ENCODE measurements at regions of chr11 and their contacts with region 1.

Region 1: GRCh38 chr11:36289226-36289852 is at the start of gene COMMD9:
- DNase-seq: peak; percentile 89 to 97 (median 92)
- ATAC-seq: peak; percentile 97
- H3K4me3 ChIP-seq: peak within 1 kb of the TSS; percentile 72
- H3K4me3 Mint-ChIP-seq: peak within 1 kb of the TSS; percentile 94
- H3K27ac ChIP-seq: no peak within 1 kb of the TSS
- H3K27ac Mint-ChIP-seq: peak within 1 kb of the TSS; percentile 73
- H3K4me1 ChIP-seq: peaks cover 11% of the 10 kb centered on the region
- H3K4me1 Mint-ChIP-seq: peaks cover 43% of the 10 kb centered on the region
- H3K27me3 ChIP-seq: no peaks in the 10 kb centered on the region
- H3K27me3 Mint-ChIP-seq: no peaks in the 10 kb centered on the region
- CTCF ChIP-seq: no peak
- total RNA-seq, gene COMMD9: 33.6 to 34.6 TPM

Region 2: DNA sequence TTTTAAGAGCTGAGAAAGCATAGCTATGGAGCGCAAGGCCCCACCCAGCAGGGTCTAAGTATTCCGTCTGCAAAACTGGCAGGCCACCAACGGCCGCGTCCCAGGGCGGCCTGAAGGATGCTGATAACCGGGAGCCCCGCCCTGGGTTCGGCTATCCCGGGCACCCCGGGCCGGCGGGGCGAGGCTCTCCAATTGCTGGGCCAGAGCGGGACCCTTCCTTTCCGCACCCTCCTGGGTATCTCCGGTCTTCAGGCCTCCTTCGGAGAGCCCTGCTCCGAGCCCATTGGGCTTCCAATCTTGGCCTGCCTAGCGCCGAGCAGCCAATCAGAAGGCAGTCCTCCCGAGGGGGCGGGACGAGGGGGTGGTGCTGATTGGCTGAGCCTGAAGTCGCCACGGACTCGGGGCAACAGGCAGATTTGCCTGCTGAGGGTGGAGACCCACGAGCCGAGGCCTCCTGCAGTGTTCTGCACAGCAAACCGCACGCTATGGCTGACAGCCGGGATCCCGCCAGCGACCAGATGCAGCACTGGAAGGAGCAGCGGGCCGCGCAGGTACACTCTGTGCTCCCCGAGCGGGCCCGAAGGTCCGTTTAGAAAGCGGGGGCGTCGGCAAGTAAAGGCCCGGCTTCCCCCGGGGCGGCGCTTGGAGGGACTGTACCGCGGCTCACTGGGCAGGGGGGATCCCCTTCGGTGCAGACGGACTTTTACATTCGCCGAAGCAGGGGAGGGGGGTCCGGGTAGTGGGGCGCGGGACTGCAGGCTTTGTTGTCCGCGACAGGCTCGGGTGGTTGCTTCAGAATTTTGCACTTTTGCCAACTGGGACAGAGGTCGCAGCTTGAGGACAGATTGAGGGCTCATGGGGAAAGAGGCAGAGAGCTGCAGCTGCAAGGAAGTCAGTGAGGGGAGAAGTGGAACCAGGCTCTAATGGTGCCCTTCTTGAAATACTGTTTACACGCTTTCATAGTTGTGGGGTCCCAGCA is 1850.5 kb before region 1 on chr11 and contains the start of gene CAT:
- CTCF ChIA-PET with region 1: no interaction called
- POLR2A ChIA-PET with region 1: no interaction called
- intact Hi-C with region 1: loop called in 1 of 2 experiments (anchors 10 kb)
- DNase-seq: peak; percentile 93 to 98 (median 98)
- ATAC-seq: peak; percentile 95
- H3K4me3 ChIP-seq: peak within 1 kb of the TSS; percentile 81
- H3K4me3 Mint-ChIP-seq: peak within 1 kb of the TSS; percentile 93
- H3K27ac ChIP-seq: peak within 1 kb of the TSS; percentile 57 to 77
- H3K27ac Mint-ChIP-seq: peak within 1 kb of the TSS; percentile 88
- H3K4me1 ChIP-seq: peaks cover 22% of the 10 kb centered on the region
- H3K4me1 Mint-ChIP-seq: peaks cover 47% of the 10 kb centered on the region
- H3K27me3 ChIP-seq: no peaks in the 10 kb centered on the region
- H3K27me3 Mint-ChIP-seq: no peaks in the 10 kb centered on the region
- CTCF ChIP-seq: no peak
- total RNA-seq, gene CAT: 8.5 to 9.8 TPM

Region 3: DNA sequence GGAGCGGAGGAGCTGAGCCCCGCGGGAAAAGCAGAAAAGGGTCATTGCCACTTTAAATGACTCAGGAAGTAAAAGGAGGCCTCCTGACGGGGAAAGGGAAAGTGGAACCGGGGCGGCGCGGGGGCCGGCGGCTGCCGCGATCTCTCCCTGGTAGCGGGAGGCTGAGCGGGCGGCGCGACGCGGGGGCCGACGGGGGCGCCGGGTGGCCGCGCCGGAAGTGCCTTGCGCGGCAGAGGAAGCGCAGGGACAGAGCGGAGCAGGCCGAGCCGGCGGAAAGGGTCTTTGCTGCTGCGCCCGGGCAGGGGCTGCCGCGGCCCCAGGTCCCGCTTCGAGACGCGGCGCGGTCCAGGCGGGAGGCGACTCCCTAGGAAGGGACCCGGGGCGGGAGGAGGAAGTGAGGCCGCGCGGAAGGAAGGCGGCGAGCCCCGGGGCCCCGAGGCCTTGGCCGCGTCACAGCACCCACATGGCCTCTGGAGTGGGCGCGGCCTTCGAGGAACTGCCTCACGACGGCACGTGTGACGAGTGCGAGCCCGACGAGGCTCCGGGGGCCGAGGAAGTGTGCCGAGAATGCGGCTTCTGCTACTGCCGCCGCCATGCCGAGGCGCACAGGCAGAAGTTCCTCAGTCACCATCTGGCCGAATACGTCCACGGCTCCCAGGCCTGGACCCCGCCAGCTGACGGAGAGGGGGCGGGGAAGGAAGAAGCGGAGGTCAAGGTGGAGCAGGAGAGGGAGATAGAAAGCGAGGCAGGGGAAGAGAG is 626.5 kb before region 1 on chr11 and contains the start of gene TRIM44:
- CTCF ChIA-PET with region 1: no interaction called
- POLR2A ChIA-PET with region 1: no interaction called
- intact Hi-C with region 1: loop called in 1 of 2 experiments (anchors 5 kb)
- DNase-seq: peak; percentile 61 to 91 (median 74)
- ATAC-seq: peak; percentile 80
- H3K4me3 ChIP-seq: peak within 1 kb of the TSS; percentile 91
- H3K4me3 Mint-ChIP-seq: peak within 1 kb of the TSS; percentile 90
- H3K27ac ChIP-seq: peak within 1 kb of the TSS; percentile 76 to 80
- H3K27ac Mint-ChIP-seq: peak within 1 kb of the TSS; percentile 90
- H3K4me1 ChIP-seq: peaks cover 25% of the 10 kb centered on the region
- H3K4me1 Mint-ChIP-seq: peaks cover 53% of the 10 kb centered on the region
- H3K27me3 ChIP-seq: peaks cover 0 to 4% of the 10 kb centered on the region in 2 experiments
- H3K27me3 Mint-ChIP-seq: peaks cover 8% of the 10 kb centered on the region
- CTCF ChIP-seq: no peak
- total RNA-seq, gene TRIM44: 32.1 to 36.7 TPM

Region 4: GRCh38 chr11:36258730-36259360 is 30.5 kb before region 1 on chr11:
- CTCF ChIA-PET with region 1: no interaction called
- POLR2A ChIA-PET with region 1: no interaction called
- intact Hi-C with region 1: no loop called
- DNase-seq: peak in 3 of 14 experiments; percentile 5 to 21 (median 17)
- ATAC-seq: no peak
- H3K4me3 ChIP-seq: no peak overlapping the region
- H3K4me3 Mint-ChIP-seq: no peak overlapping the region
- H3K27ac ChIP-seq: no peak overlapping the region
- H3K27ac Mint-ChIP-seq: no peak overlapping the region
- H3K4me1 ChIP-seq: no peaks in the 10 kb centered on the region
- H3K4me1 Mint-ChIP-seq: no peaks in the 10 kb centered on the region
- H3K27me3 ChIP-seq: peaks cover 6 to 25% of the 10 kb centered on the region in 2 experiments
- H3K27me3 Mint-ChIP-seq: peaks cover 57% of the 10 kb centered on the region
- CTCF ChIP-seq: no peak

Region 5: DNA sequence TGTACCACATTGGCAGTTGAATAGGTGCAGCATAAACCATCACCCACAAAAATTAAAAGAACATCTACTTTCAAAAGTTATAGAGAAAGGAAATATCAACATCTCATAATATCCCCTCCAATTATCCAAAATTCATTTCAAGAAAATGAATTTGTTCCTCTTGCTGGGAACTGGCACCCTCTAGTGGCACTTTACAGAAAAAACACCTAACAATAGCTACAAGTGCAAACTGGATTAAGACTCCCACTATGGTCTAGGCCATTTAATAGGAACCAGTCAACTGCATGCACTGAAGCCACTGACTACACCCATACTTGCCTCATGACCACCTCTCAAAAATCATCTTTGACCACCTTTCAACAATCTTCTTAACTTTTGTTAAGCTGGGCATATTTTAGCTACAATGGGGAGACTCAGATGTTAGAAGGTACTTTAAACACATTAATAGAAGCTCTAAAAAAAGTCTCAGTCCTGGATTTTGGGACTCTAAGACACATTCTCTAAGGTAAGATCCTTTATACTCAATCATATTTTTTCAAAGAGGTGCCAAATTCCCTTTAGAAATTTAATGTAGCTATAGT is 203.5 kb after region 1 on chr11:
- CTCF ChIA-PET with region 1: interaction called, 15 read pairs
- POLR2A ChIA-PET with region 1: interaction called, 4 read pairs
- intact Hi-C with region 1: loop called (anchors 5 kb)
- DNase-seq: peak in 6 of 14 experiments; percentile 11 to 77 (median 52)
- ATAC-seq: peak; percentile 67
- H3K4me3 ChIP-seq: no peak overlapping the region
- H3K4me3 Mint-ChIP-seq: no peak overlapping the region
- H3K27ac ChIP-seq: no peak overlapping the region
- H3K27ac Mint-ChIP-seq: peak overlapping the region; percentile 18
- H3K4me1 ChIP-seq: peaks cover 2% of the 10 kb centered on the region
- H3K4me1 Mint-ChIP-seq: peaks cover 33% of the 10 kb centered on the region
- H3K27me3 ChIP-seq: no peaks in the 10 kb centered on the region
- H3K27me3 Mint-ChIP-seq: no peaks in the 10 kb centered on the region
- CTCF ChIP-seq: peak; percentile 89

Region 6: DNA sequence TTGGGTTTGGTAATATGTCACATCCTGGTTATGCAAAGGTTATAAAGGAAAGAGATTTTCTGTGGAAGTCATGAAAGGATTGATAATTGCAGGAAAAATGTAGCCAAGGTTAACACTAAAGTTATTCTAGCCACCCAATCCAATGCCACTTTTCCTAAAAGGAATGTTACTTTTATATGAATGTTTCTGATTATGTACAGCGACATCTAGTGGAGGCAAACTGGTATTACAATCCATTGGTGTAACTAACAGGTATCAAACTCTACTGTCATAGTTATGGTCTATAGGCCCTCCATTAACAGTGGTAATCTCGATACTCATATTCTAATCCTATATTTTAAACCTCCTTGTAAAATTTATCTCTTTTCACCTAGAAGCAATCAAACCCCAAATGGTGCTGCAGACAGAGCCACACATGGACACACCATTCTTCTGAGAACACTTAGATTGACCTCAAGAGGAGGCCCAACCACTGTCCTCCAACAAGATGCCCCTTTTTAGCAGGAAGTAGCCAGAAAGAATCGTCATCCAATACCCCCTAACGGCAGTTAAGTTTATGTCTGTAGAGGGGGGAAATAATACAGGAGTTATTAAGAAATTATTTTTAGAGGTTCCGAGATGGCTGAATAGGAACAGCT is 383.6 kb after region 1 on chr11:
- CTCF ChIA-PET with region 1: no interaction called
- POLR2A ChIA-PET with region 1: no interaction called
- intact Hi-C with region 1: loop called in 1 of 2 experiments (anchors 5 kb)
- DNase-seq: peak in 5 of 14 experiments; percentile 2 to 64 (median 47)
- ATAC-seq: no peak
- H3K4me3 ChIP-seq: no peak overlapping the region
- H3K4me3 Mint-ChIP-seq: no peak overlapping the region
- H3K27ac ChIP-seq: no peak overlapping the region
- H3K27ac Mint-ChIP-seq: no peak overlapping the region
- H3K4me1 ChIP-seq: no peaks in the 10 kb centered on the region
- H3K4me1 Mint-ChIP-seq: no peaks in the 10 kb centered on the region
- H3K27me3 ChIP-seq: peaks cover 0 to 8% of the 10 kb centered on the region in 2 experiments
- H3K27me3 Mint-ChIP-seq: peaks cover 38% of the 10 kb centered on the region
- CTCF ChIP-seq: peak; percentile 97

Measured in CD4-positive, alpha-beta T cell (primary cell).